Mammary epithelial cell (primary cell): ENCODE measurements at regions of chr9 and their contacts with region 1.

Region 1: DNA sequence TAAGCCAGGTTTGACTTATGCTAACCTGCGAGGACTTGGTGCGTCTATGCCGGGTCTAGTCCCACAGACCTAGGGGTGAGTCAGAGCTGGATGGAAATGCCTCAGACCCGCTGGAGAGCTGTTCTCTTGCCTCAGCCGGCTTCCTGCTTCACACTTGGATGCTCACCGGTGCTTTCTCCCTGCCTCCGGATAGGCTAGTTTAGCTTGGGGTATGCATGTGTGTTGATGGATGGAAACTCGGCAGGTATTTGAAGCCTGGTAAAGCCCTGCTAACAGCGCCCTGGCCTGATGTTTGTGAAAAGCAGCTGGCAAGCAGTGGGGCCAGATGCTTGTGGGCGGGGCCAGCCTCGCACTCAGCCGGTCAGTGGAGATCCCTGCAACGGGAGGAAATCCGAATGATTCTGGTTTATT is 29.3 kb downstream of the PRRC2B start:
- DNase-seq: peak; percentile 97
- H3K4me3 ChIP-seq: peak overlapping the region in 1 of 3 experiments; percentile 20
- H3K27ac ChIP-seq: no peak overlapping the region
- H3K4me1 ChIP-seq: peaks cover 44% of the 10 kb centered on the region
- H3K27me3 ChIP-seq: no peaks in the 10 kb centered on the region
- CTCF ChIP-seq: no peak

Region 2: DNA sequence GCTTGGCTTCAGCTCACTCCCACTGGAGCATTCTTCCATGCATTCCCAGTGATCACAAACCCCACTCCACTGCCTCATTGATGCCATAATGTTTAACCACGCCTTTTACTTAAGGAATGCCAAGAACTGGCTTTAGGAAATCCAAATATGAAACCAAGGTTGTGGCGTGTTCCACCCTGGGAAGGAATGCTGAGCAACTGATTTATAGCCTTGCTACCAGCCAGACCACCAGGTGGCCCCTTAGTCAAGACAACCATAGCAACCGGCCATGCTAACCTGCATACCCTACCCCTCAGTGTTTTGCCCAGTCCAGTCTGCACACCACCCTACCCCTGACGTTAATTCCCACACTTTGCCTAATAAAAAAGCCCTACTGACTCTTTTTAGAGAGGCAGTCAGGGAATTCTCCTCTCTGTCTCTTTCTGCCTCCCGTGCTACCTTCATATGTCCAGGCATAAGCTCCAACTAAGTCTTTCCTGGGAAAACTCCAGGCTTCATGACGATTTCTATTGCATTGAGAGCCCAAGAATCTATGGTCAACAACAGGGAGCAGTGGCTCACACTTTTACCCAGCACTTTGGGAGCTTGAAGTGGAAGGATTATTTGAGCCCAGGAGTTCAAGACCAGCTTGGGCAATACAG is 56.3 kb before region 1 on chr9:
- CTCF ChIA-PET with region 1: interaction called, 3 read pairs
- dilution Hi-C with region 1: no loop called
- in situ Hi-C with region 1: no loop called
- intact Hi-C with region 1: loop called (anchors 5 kb)
- DNase-seq: peak; percentile 41
- H3K4me3 ChIP-seq: no peak overlapping the region
- H3K27ac ChIP-seq: peak overlapping the region; percentile 23
- H3K4me1 ChIP-seq: peaks cover 9% of the 10 kb centered on the region
- H3K27me3 ChIP-seq: no peaks in the 10 kb centered on the region
- CTCF ChIP-seq: peak; percentile 26 to 31

Region 3: GRCh38 chr9:131407717-131408195 is 15.4 kb before region 1 on chr9:
- CTCF ChIA-PET with region 1: no interaction called
- dilution Hi-C with region 1: no loop called
- in situ Hi-C with region 1: no loop called
- intact Hi-C with region 1: loop called (anchors 1 kb)
- DNase-seq: peak; percentile 73
- H3K4me3 ChIP-seq: peak overlapping the region in 2 of 3 experiments; percentile 6 to 16
- H3K27ac ChIP-seq: peak overlapping the region; percentile 44
- H3K4me1 ChIP-seq: peaks cover 60% of the 10 kb centered on the region
- H3K27me3 ChIP-seq: no peaks in the 10 kb centered on the region
- CTCF ChIP-seq: peak; percentile 59 to 69